Activated CD4-positive, alpha-beta memory T cell treated with anti-CD3 and anti-CD28 coated beads for 36 hours (primary cell): ENCODE measurements at regions of chr4 and their contacts with region 1.

Region 1: GRCh38 chr4:184733654-184734524 is at the start of gene CENPU:
- DNase-seq: peak; percentile 97
- H3K4me3 Mint-ChIP-seq: peak within 1 kb of the TSS; percentile 99
- H3K27ac Mint-ChIP-seq: peak within 1 kb of the TSS; percentile 88
- H3K4me1 Mint-ChIP-seq: peaks cover 24% of the 10 kb centered on the region
- H3K27me3 Mint-ChIP-seq: no peaks in the 10 kb centered on the region
- total RNA-seq, gene CENPU: 82.7 to 87.6 TPM

Region 2: GRCh38 chr4:184282251-184282713 is 451.6 kb before region 1 on chr4:
- CTCF ChIA-PET with region 1: interaction called, 3 read pairs
- POLR2A ChIA-PET with region 1: interaction called, 3 read pairs
- intact Hi-C with region 1: loop called (anchors 5 kb)
- DNase-seq: peak; percentile 87
- H3K4me3 Mint-ChIP-seq: peak overlapping the region; percentile 10
- H3K27ac Mint-ChIP-seq: peak overlapping the region; percentile 91
- H3K4me1 Mint-ChIP-seq: peaks cover 71% of the 10 kb centered on the region
- H3K27me3 Mint-ChIP-seq: peaks cover 4% of the 10 kb centered on the region

Region 3: DNA sequence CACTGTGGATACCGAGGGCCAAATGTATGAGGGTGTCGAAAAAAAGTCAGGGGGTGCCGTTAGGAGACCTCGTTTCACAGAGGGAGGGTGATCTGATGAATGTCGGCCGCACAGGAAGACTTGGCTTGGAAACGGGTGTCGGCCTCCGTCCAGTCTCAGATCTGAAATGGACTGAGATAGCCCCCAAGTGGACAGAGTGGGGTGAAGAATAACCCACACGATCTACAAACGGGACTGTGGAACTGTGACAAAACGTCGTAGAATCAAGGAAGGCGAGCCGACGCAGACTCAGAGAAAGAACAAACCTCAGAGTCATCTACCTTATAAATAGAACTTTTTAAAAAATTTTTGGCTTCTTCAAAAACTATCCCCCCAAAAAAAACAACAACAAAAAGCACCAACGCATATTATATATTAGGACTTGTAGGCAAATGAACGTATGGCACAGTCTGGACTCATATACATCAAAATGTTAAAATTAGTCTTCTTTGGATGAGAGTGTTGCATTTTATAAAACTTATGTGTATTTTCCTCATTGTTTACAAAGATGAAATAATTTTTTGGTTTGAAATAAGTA is 195.8 kb before region 1 on chr4:
- CTCF ChIA-PET with region 1: no interaction called
- POLR2A ChIA-PET with region 1: no interaction called
- intact Hi-C with region 1: loop called (anchors 2 kb)
- DNase-seq: peak; percentile 75
- H3K4me3 Mint-ChIP-seq: peak overlapping the region; percentile 95
- H3K27ac Mint-ChIP-seq: peak overlapping the region; percentile 96
- H3K4me1 Mint-ChIP-seq: peaks cover 38% of the 10 kb centered on the region
- H3K27me3 Mint-ChIP-seq: no peaks in the 10 kb centered on the region

Region 4: GRCh38 chr4:184668511-184669114 is 65.3 kb before region 1 on chr4:
- CTCF ChIA-PET with region 1: no interaction called
- POLR2A ChIA-PET with region 1: no interaction called
- intact Hi-C with region 1: no loop called
- DNase-seq: peak; percentile 15
- H3K4me3 Mint-ChIP-seq: no peak overlapping the region
- H3K27ac Mint-ChIP-seq: peak overlapping the region; percentile 61
- H3K4me1 Mint-ChIP-seq: peaks cover 23% of the 10 kb centered on the region
- H3K27me3 Mint-ChIP-seq: no peaks in the 10 kb centered on the region

Region 5: GRCh38 chr4:184722798-184723197 is 11.1 kb before region 1 on chr4:
- CTCF ChIA-PET with region 1: interaction called, 17 read pairs
- POLR2A ChIA-PET with region 1: interaction called, 5 read pairs
- intact Hi-C with region 1: no loop called
- DNase-seq: no peak
- H3K4me3 Mint-ChIP-seq: no peak overlapping the region
- H3K27ac Mint-ChIP-seq: no peak overlapping the region
- H3K4me1 Mint-ChIP-seq: no peaks in the 10 kb centered on the region
- H3K27me3 Mint-ChIP-seq: no peaks in the 10 kb centered on the region

Region 6: GRCh38 chr4:184792950-184793555 is 59.2 kb after region 1 on chr4:
- CTCF ChIA-PET with region 1: no interaction called
- POLR2A ChIA-PET with region 1: interaction called, 3 read pairs
- intact Hi-C with region 1: loop called (anchors 2 kb)
- DNase-seq: peak; percentile 65
- H3K4me3 Mint-ChIP-seq: peak overlapping the region; percentile 2
- H3K27ac Mint-ChIP-seq: no peak overlapping the region
- H3K4me1 Mint-ChIP-seq: peaks cover 27% of the 10 kb centered on the region
- H3K27me3 Mint-ChIP-seq: no peaks in the 10 kb centered on the region

Region 7: DNA sequence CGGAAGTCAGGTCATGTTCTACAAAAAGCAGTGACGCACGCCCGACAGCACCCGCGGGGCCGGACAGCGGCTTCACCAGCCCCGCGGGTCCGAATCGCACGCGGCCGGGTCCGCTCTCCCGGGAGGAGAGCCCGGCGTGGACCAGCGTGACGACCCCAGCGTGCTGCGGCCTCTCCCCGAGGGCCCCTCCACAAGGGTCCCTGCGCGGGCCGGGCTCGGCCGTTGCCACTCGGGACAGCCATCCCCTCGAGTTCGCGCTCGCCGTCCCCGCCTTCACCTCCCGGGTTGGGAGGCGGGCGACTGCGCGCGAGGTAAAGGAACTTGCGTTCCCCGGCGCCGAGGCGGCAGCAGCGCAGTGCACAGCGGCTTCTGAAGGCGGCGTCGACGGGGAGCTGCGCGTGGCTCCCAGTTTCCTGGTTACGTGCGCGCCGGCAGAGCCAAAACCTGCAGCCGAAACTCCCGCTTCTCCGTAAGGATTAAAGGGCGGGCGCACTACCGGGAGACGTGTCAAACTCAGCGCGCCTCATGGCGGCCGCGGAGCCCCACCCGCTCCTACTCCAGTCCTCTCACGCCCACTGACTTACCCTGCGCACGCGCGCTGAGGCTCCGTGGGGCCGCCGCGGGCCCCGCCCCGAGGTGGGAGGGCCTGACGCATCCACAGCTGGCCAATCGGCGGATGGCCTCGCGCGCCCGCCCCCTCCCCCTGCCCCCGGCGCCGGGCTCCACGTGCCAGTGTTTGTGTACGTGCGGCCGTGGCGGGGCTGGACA is 662.3 kb after region 1 on chr4:
- CTCF ChIA-PET with region 1: interaction called, 3 read pairs
- POLR2A ChIA-PET with region 1: no interaction called
- intact Hi-C with region 1: loop called (anchors 2 kb)
- DNase-seq: peak; percentile 98
- H3K4me3 Mint-ChIP-seq: peak overlapping the region; percentile 95
- H3K27ac Mint-ChIP-seq: peak overlapping the region; percentile 97
- H3K4me1 Mint-ChIP-seq: peaks cover 37% of the 10 kb centered on the region
- H3K27me3 Mint-ChIP-seq: no peaks in the 10 kb centered on the region